HepG2 (cell line): ENCODE measurements at regions of chr1 and their contacts with region 1.

Region 1: DNA sequence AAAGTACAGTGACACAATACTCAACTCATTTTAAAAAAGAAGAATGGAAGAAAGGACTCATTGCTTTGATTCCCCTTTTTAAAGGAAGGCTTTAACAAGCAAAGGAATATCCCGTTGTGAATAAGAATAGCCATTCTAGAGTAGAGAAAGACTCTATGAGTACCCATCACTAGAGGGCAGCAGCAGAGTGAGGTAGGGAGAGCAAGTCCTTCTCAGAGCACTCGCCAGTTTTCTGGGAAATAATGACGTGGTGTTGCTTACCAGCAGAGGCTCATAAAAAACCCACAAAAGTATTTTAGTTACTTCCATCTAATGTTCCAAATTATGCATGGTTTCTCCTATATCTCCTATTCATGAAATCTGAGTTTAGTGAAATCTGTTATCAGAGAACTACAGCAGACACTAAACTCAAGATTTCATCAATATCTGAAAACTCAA is 74.6 kb downstream of the USP24 start:
- DNase-seq: peak; percentile 65
- ATAC-seq: peak; percentile 85
- H3K4me3 ChIP-seq: no peak overlapping the region
- H3K27ac ChIP-seq: no peak overlapping the region
- H3K4me1 ChIP-seq: no peaks in the 10 kb centered on the region
- H3K27me3 ChIP-seq: no peaks in the 10 kb centered on the region
- CTCF ChIP-seq: peak; percentile 79
- EP300 ChIP-seq: no peak
- POLR2A ChIP-seq: no peak
- RAD21 ChIP-seq: peak; percentile 49

Region 2: DNA sequence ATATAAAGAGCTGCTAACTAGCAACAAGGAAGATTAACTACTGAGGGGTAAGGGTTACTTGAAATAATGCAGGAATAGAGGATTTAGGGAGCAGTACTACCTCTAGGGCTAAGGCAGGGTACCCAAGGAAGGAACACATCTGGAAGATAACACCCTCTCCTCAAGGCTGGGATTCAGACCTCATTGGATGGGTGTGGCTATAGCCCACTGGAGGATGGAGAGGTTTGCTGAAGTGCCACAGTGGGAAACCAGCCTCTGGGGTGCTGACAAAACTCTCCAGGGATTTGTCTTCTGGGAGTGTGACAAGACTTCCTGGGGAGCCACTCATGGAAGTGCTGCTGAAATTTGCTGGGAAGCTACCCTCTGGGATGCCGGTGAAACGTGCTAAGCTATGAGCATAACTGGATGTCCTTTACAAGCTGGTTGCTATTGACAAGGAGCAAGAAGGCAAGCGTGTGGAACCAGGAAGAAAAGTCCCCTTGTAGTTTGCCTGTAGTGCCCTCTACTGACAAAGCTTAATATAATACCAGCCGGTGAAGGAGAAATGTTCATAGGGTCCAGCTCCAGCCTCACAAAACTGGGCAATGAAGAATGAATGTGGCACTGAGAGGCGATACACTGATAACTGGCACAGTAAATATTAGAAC is 197.4 kb after region 1 on chr1:
- CTCF ChIA-PET with region 1: interaction called, 4 read pairs
- POLR2A ChIA-PET with region 1: no interaction called
- in situ Hi-C with region 1: no loop called
- intact Hi-C with region 1: loop called (anchors 5 kb)
- DNase-seq: peak; percentile 35
- ATAC-seq: peak; percentile 83
- H3K4me3 ChIP-seq: no peak overlapping the region
- H3K27ac ChIP-seq: no peak overlapping the region
- H3K4me1 ChIP-seq: peaks cover 13% of the 10 kb centered on the region
- H3K27me3 ChIP-seq: peaks cover 0 to 11% of the 10 kb centered on the region in 2 experiments; a peak in 3 of 5 replicates
- CTCF ChIP-seq: peak; percentile 77
- EP300 ChIP-seq: no peak
- POLR2A ChIP-seq: no peak
- RAD21 ChIP-seq: peak; percentile 50; the same call in 1 of the 2 replicates